CD4-positive, alpha-beta T cell (primary cell): ENCODE measurements at regions of chr15 and their contacts with region 1.

Region 1: DNA sequence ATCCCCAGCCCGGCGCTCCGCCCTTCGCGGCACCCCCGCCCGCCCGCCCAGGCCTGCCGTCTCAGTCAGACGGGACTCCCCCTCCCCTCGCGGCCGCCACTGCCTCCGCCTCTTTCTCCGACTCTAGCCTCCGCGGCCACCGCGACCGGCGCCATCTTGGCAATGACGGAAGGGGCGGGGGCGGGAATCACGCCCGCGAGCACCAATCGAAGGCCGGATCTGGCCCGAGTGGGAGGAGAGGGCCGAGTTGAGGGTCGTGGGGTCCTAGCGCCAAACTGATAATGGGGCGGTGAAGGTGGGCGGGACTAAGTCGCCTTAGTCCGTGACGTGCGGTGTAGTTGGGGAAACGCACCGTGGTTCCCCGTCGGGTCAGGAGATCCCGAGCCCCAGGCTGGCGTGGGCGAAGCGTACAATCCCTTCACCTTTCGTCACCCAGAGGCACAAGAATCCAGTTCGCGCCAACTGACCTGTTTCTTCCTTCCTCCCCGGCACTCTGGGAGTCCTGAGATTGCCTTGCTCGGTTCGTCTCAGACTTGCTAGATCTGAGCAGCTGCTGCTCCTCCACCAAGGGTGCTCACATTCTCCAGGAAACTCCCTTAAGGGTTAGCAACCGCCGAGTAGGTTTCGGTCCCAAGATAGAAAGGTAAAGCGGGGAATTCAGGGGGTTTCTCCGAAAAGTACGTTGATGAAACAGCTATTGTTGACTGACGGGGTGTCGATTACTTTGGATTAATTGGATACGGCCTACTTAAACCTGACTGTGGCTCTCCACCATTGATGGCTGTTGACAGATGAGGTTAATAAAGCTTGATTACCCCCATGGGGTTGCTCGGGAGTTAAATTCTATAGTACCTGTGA is at the start of gene DENND4A:
- DNase-seq: peak; percentile 97 to 100 (median 98)
- ATAC-seq: peak; percentile 79
- H3K4me3 ChIP-seq: peak within 1 kb of the TSS; percentile 96
- H3K4me3 Mint-ChIP-seq: peak within 1 kb of the TSS; percentile 90
- H3K27ac ChIP-seq: peak within 1 kb of the TSS; percentile 99
- H3K27ac Mint-ChIP-seq: peak within 1 kb of the TSS; percentile 99
- H3K4me1 ChIP-seq: peaks cover 28% of the 10 kb centered on the region
- H3K4me1 Mint-ChIP-seq: peaks cover 64% of the 10 kb centered on the region
- H3K27me3 ChIP-seq: no peaks in the 10 kb centered on the region
- H3K27me3 Mint-ChIP-seq: no peaks in the 10 kb centered on the region
- CTCF ChIP-seq: no peak
- total RNA-seq, gene DENND4A: 64.1 to 69.6 TPM

Region 2: GRCh38 chr15:65777053-65777452 is 15.3 kb before region 1 on chr15:
- CTCF ChIA-PET with region 1: interaction called, 6 read pairs
- POLR2A ChIA-PET with region 1: interaction called, 12 read pairs
- intact Hi-C with region 1: loop called in 1 of 2 experiments (anchors 2 kb)
- DNase-seq: no peak
- ATAC-seq: no peak
- H3K4me3 ChIP-seq: no peak overlapping the region
- H3K4me3 Mint-ChIP-seq: no peak overlapping the region
- H3K27ac ChIP-seq: no peak overlapping the region
- H3K27ac Mint-ChIP-seq: no peak overlapping the region
- H3K4me1 ChIP-seq: peaks cover 48% of the 10 kb centered on the region
- H3K4me1 Mint-ChIP-seq: peaks cover 43% of the 10 kb centered on the region
- H3K27me3 ChIP-seq: no peaks in the 10 kb centered on the region
- H3K27me3 Mint-ChIP-seq: no peaks in the 10 kb centered on the region
- CTCF ChIP-seq: no peak

Region 3: DNA sequence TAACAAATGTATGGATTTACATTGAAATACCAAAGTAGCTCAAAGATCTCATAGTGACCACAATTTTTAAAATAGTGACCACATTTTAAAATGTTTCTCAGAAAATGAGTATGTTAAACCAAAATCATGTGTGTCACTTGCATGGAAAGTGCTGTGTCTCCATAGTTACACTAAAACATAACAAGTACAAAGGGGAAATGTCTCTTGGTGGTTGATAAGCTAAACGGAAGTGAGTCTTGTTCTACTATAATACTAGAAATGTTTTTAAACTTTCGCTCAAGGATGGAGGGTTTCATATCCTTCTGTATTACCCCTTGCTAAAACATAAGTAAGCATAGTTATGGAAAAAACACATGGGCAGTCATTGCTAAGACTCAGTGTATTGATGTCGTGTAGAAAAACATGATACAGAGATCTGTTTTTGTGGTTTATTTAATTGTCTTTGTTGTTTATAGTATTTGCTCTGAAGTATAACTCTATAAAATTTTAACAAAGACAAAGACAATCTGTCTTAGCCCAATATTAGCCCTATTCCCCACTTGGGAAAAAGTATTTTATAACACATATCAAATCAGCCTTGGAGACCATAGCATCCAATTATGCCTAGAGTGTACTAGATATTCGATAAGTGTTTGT is 26.7 kb after region 1 on chr15:
- CTCF ChIA-PET with region 1: interaction called, 7 read pairs
- POLR2A ChIA-PET with region 1: interaction called, 93 read pairs
- intact Hi-C with region 1: loop called (anchors 1 to 2 kb)
- DNase-seq: peak in 3 of 14 experiments; percentile 89 to 95 (median 92)
- ATAC-seq: peak; percentile 90
- H3K4me3 ChIP-seq: no peak overlapping the region
- H3K4me3 Mint-ChIP-seq: peak overlapping the region; percentile 59
- H3K27ac ChIP-seq: peak overlapping the region; percentile 82 to 94
- H3K27ac Mint-ChIP-seq: peak overlapping the region; percentile 94
- H3K4me1 ChIP-seq: peaks cover 51% of the 10 kb centered on the region
- H3K4me1 Mint-ChIP-seq: peaks cover 60% of the 10 kb centered on the region
- H3K27me3 ChIP-seq: no peaks in the 10 kb centered on the region
- H3K27me3 Mint-ChIP-seq: no peaks in the 10 kb centered on the region
- CTCF ChIP-seq: no peak

Region 4: DNA sequence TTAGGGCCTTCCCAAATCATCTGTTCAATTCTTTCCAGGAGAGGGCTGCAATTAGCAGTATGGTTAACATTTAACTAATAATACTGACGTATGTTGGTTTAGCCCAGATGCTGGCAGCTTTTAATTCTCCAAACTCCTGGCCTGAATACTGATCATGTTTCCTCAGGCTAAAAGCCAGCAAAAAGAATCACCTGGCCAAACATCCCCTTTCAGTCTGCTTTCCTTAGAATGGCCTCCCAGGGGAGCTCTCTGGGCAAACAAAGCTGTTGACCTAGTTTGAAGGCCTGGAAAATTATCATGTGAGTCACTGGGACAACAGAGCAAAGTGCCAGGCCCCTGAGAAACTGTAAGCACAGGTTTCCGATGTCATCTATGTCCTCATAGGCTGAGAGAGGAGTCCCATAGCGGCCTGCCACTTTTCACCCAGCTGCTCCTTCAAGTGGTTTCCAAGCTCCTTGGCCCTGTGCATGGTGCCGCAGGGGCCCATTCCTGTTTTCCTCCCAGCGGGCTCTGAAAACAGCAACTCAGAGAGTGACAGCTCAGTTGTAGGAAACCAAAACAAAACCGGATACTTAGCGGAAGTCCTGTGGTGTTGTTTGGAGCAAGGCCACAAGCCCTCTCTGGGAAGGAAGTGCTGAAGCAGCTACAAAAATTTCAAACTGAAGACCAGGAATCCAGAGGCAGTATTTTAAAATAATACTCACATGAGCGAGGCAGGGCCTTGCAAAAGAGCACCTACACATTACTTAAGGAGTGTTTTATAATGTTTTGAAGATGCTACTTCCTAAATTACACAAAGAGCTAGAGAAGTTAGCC is 40.4 kb after region 1 on chr15:
- CTCF ChIA-PET with region 1: interaction called, 9 read pairs
- POLR2A ChIA-PET with region 1: interaction called, 60 read pairs
- intact Hi-C with region 1: loop called (anchors 1 to 2 kb)
- DNase-seq: peak in 13 of 14 experiments; percentile 18 to 87 (median 45)
- ATAC-seq: peak; percentile 52
- H3K4me3 ChIP-seq: peak overlapping the region; percentile 2
- H3K4me3 Mint-ChIP-seq: peak overlapping the region; percentile 82
- H3K27ac ChIP-seq: peak overlapping the region; percentile 71 to 80
- H3K27ac Mint-ChIP-seq: peak overlapping the region; percentile 95
- H3K4me1 ChIP-seq: peaks cover 64% of the 10 kb centered on the region
- H3K4me1 Mint-ChIP-seq: peaks cover 59% of the 10 kb centered on the region
- H3K27me3 ChIP-seq: no peaks in the 10 kb centered on the region
- H3K27me3 Mint-ChIP-seq: no peaks in the 10 kb centered on the region
- CTCF ChIP-seq: no peak